ENCODE measurements at regions of chr9 and their contacts with region 1.

Region 1: GRCh38 chr9:33081128-33081851 is 4.8 kb upstream of the SMU1 start:
- DNase-seq: peak in 2 of 3 donors; percentile 43 to 66
- ATAC-seq: peak; percentile 67 to 77 (median 73)
- H3K4me3 ChIP-seq: no peak overlapping the region
- H3K27ac ChIP-seq: peak overlapping the region in 2 of 3 donors; percentile 21 to 64
- H3K4me1 ChIP-seq: peaks cover 0 to 20% (median 10%) of the 10 kb centered on the region in 4 donors
- H3K27me3 ChIP-seq: no peaks in the 10 kb centered on the region
- CTCF ChIP-seq: peak; percentile 63 to 96 (median 68)
- POLR2A ChIP-seq: no peak

Region 2: GRCh38 chr9:33167046-33167808 is 85.9 kb after region 1 on chr9 and contains the start of gene B4GALT1:
- intact Hi-C with region 1: loop called (anchors 10 kb)
- DNase-seq: peak; percentile 98 to 99 (median 98)
- ATAC-seq: peak; percentile 55 to 78 (median 67)
- H3K4me3 ChIP-seq: peak within 1 kb of the TSS; percentile 82 to 95 (median 88)
- H3K27ac ChIP-seq: peak within 1 kb of the TSS; percentile 98 to 99 (median 99)
- H3K4me1 ChIP-seq: peaks cover 0 to 50% (median 16%) of the 10 kb centered on the region in 4 donors
- H3K27me3 ChIP-seq: no peaks in the 10 kb centered on the region
- CTCF ChIP-seq: peak in 2 of 4 donors; percentile 6 to 14
- POLR2A ChIP-seq: peak; percentile 96
- total RNA-seq, gene B4GALT1: 48.5 to 145 (median 79.5) TPM

Region 3: DNA sequence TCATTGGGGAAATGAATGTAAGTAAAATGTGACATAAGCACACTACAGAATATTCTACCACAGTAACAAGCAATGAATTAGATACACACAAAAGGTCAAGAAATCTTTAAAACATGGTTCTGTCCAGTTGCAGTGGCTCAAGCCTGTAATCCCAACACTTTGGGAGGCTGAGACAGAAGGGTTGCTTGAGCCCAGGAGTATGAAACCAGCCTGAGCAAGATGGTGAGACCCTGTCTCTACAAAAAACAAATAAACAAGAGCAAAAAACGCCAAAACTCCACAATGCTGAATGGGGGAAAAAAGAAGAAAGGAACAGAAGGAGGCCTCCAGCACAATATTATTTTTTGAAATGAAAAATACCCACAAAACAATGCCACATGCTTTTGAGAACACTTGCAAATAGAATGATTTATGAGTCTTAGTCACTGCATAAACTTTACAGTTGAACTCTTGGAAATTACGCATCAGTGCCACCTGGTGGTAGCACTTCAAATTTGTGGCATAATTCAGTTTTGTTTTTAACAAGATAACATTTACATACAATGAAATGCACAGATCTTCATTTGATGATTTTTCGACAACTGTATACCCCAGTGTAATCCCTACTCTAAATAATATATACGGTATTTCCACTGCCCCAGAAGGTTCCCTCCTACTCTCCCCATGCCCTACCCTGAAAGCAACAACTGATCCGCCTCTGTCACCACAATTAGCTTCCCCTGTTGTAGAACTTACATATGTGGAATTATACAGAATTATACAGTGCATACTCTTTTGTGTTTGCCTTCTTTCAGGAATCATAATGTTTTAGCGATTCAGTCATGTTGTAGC is 144.2 kb after region 1 on chr9:
- intact Hi-C with region 1: loop called (anchors 5 kb)
- DNase-seq: peak in 1 of 3 donors; percentile 62
- ATAC-seq: peak; percentile 57 to 71 (median 68)
- H3K4me3 ChIP-seq: no peak overlapping the region
- H3K27ac ChIP-seq: no peak overlapping the region
- H3K4me1 ChIP-seq: no peaks in the 10 kb centered on the region
- H3K27me3 ChIP-seq: no peaks in the 10 kb centered on the region
- CTCF ChIP-seq: peak; percentile 74 to 93 (median 80)
- POLR2A ChIP-seq: no peak

Measured in right lobe of liver (tissue), 6 donors.